ENCODE measurements at regions of chr19 and their contacts with region 1.

Region 1: GRCh38 chr19:56314562-56315077 is at the start of gene ZSCAN5A:
- DNase-seq: peak; percentile 93 to 99 (median 96)
- ATAC-seq: peak; percentile 76
- H3K4me3 ChIP-seq: peak within 1 kb of the TSS; percentile 76
- H3K4me3 Mint-ChIP-seq: peak within 1 kb of the TSS; percentile 91
- H3K27ac ChIP-seq: peak within 1 kb of the TSS; percentile 93 to 99
- H3K27ac Mint-ChIP-seq: peak within 1 kb of the TSS; percentile 95
- H3K4me1 ChIP-seq: peaks cover 14% of the 10 kb centered on the region
- H3K4me1 Mint-ChIP-seq: peaks cover 34% of the 10 kb centered on the region
- H3K27me3 ChIP-seq: no peaks in the 10 kb centered on the region
- H3K27me3 Mint-ChIP-seq: no peaks in the 10 kb centered on the region
- CTCF ChIP-seq: no peak
- total RNA-seq, gene ZSCAN5A: 3.3 to 4.4 TPM

Region 2: DNA sequence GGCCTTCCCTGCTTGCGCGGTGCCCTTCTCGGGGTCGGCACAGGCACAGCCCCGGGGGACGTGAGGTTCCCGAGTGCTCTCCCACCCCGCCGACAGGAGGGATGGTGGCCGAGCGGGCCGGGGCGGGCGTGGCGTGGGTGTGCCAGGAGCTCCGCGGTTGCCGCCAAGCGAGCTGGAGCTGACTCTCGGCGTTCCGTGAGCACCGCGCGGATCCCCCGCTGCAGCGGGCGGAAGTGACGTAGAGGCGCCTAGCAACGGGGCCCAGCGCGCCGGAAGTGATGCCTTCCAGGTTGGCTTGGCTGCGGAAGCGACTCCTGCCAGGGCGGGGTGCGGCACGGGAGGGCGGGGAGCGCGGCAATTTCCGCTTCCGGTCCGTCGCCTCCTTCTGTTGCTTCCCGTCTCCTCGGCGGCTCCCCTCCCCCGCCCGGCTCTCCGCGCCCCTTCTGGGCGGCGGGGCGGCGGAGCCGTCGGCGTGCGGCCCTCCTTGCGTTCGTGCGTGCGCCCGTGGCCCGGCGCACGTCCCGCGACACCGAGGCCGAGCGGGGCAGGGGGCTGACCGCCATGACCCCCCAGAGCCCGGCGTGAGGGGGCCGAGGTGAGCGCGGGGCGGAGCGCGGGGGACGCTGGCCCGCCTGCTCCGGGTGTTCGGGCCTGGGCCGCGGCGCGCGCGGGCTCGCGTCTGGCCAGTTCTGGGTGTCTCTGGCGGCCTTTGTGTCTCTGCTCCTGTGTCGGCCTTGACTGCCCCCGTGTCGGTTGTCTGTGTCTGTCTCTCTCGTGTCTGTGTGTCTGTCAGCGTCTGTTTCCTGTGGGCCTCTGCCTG is 639.6 kb before region 1 on chr19 and contains the start of gene EPN1:
- CTCF ChIA-PET with region 1: no interaction called
- POLR2A ChIA-PET with region 1: no interaction called
- intact Hi-C with region 1: loop called in 1 of 2 experiments (anchors 10 kb)
- DNase-seq: peak; percentile 95 to 99 (median 97)
- ATAC-seq: peak; percentile 92
- H3K4me3 ChIP-seq: peak within 1 kb of the TSS; percentile 73
- H3K4me3 Mint-ChIP-seq: peak within 1 kb of the TSS; percentile 95
- H3K27ac ChIP-seq: peak within 1 kb of the TSS; percentile 69 to 89
- H3K27ac Mint-ChIP-seq: peak within 1 kb of the TSS; percentile 90
- H3K4me1 ChIP-seq: peaks cover 59% of the 10 kb centered on the region
- H3K4me1 Mint-ChIP-seq: peaks cover 50% of the 10 kb centered on the region
- H3K27me3 ChIP-seq: no peaks in the 10 kb centered on the region
- H3K27me3 Mint-ChIP-seq: no peaks in the 10 kb centered on the region
- CTCF ChIP-seq: no peak
- total RNA-seq, gene EPN1: 39.0 to 40.5 TPM

Region 3: DNA sequence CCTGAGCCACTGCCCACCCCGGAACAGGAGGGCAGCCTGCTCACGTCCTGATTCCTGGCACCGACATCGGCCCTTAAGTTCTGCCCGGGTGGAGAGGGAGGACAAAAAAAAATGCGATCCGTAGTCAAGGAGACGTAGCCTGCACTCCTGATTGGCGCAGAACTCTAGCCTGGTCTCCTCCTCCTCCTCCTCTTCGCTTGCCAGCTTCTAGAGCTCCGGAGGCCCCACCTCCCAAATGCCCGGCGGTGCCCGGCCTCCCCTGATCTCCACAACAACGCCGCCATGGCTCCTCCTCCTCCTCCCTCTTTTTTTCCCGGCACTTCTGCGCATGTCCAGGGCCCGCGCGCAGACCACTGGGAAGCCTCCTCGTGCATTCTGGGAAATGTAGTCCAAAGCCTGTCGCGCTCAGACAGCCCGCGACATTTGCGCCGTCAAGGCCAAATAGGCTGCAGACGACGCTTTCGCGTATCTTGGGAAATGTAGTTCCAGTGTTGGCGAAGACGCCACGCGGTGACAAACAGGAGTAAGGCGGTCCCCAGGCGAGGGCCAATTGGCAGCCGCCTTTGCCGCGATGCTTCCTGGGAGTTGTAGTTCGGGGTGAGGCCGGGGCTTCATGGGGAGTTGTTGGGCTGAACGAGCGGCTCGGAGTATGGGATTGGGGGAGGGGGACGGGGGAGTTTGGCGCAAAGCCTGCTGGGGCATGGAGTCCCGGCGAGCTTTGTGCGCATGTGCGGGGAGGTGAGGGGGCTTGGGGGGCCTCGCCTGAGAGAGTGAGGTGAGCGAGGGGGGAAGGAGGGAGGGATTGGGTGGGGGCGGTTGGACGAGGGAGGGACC is 173.8 kb before region 1 on chr19 and contains the start of gene ZNF444:
- CTCF ChIA-PET with region 1: interaction called, 4 read pairs
- POLR2A ChIA-PET with region 1: interaction called, 11 read pairs
- intact Hi-C with region 1: loop called (anchors 1 kb)
- DNase-seq: peak; percentile 98 to 100 (median 99)
- ATAC-seq: peak; percentile 83
- H3K4me3 ChIP-seq: peak within 1 kb of the TSS; percentile 70
- H3K4me3 Mint-ChIP-seq: peak within 1 kb of the TSS; percentile 96
- H3K27ac ChIP-seq: peak within 1 kb of the TSS; percentile 74 to 78
- H3K27ac Mint-ChIP-seq: peak within 1 kb of the TSS; percentile 85
- H3K4me1 ChIP-seq: peaks cover 35% of the 10 kb centered on the region
- H3K4me1 Mint-ChIP-seq: peaks cover 37% of the 10 kb centered on the region
- H3K27me3 ChIP-seq: no peaks in the 10 kb centered on the region
- H3K27me3 Mint-ChIP-seq: no peaks in the 10 kb centered on the region
- CTCF ChIP-seq: no peak
- total RNA-seq, gene ZNF444: 13.5 TPM

Region 4: DNA sequence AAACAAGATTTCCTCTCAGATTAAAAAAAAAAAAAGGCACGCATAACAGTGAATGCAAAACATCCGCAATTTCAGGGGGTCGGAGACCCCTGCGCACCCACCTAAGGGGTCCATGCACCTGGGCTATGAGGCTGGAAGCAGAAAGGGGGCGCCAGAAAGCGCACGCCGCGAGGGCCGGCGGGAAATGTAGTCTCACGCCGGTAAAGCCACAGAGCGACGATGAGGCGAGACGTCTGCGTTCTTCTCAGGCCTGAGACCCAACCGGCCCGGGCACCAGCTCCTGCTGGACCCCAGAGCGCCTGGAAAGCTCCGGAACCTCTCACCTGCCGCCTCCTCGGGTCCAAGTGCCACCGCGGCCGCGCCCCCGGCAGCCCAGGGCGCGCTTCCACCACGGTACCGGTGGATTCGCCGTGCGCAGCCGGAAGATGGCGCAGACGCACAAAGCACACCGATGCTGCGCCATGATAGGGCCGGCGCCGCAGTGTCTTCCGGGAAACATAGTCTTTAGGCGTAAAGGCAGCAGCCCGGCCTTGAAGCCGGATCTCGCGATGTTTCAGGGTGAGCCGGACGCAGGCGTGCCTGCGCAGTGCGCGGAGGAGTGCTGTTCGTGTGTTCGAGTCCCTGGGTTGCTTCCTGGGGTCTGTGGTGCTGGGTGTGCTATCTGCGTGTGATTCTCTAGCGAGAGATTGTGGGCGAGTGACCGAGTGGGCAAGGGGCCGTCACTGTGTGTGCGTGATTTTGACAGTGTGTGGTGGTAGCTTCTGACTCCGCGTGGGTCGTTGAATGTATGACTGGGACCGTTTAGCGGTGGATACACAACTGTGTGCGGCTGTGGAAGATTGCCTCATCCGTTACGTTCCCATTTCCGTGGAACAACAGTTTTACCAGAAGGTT is 78.7 kb after region 1 on chr19 and contains the start of gene ZNF582:
- CTCF ChIA-PET with region 1: interaction called, 3 read pairs
- POLR2A ChIA-PET with region 1: interaction called, 3 read pairs
- intact Hi-C with region 1: loop called (anchors 1 to 2 kb)
- DNase-seq: peak; percentile 83 to 97 (median 89)
- ATAC-seq: peak; percentile 97
- H3K4me3 ChIP-seq: peak within 1 kb of the TSS; percentile 66
- H3K4me3 Mint-ChIP-seq: peak within 1 kb of the TSS; percentile 97
- H3K27ac ChIP-seq: peak within 1 kb of the TSS; percentile 92 to 93
- H3K27ac Mint-ChIP-seq: peak within 1 kb of the TSS; percentile 78
- H3K4me1 ChIP-seq: peaks cover 10% of the 10 kb centered on the region
- H3K4me1 Mint-ChIP-seq: peaks cover 6% of the 10 kb centered on the region
- H3K27me3 ChIP-seq: no peaks in the 10 kb centered on the region
- H3K27me3 Mint-ChIP-seq: no peaks in the 10 kb centered on the region
- CTCF ChIP-seq: peak; percentile 80
- total RNA-seq, gene ZNF582: 1.5 to 1.8 TPM

Region 5: GRCh38 chr19:56671613-56671994 is 357.0 kb after region 1 on chr19 and contains the start of gene ZNF835:
- CTCF ChIA-PET with region 1: no interaction called
- POLR2A ChIA-PET with region 1: interaction called, 5 read pairs
- intact Hi-C with region 1: loop called in 1 of 2 experiments (anchors 5 kb)
- DNase-seq: peak; percentile 60 to 87 (median 77)
- ATAC-seq: peak; percentile 92
- H3K4me3 ChIP-seq: peak within 1 kb of the TSS; percentile 50
- H3K4me3 Mint-ChIP-seq: peak within 1 kb of the TSS; percentile 87
- H3K27ac ChIP-seq: peak within 1 kb of the TSS in 1 of 2 donors; percentile 25
- H3K27ac Mint-ChIP-seq: peak within 1 kb of the TSS; percentile 65
- H3K4me1 ChIP-seq: peaks cover 15% of the 10 kb centered on the region
- H3K4me1 Mint-ChIP-seq: peaks cover 14% of the 10 kb centered on the region
- H3K27me3 ChIP-seq: no peaks in the 10 kb centered on the region
- H3K27me3 Mint-ChIP-seq: no peaks in the 10 kb centered on the region
- CTCF ChIP-seq: no peak
- total RNA-seq, gene ZNF835: 0.82 to 1.1 TPM

Measured in CD4-positive, alpha-beta T cell (primary cell).